ENCODE measurements at regions of chr10 and their contacts with region 1.

Region 1: GRCh38 chr10:4849555-4850242 is 23.7 kb downstream of the AKR1E2 start:
- DNase-seq: peak; percentile 92

Region 2: DNA sequence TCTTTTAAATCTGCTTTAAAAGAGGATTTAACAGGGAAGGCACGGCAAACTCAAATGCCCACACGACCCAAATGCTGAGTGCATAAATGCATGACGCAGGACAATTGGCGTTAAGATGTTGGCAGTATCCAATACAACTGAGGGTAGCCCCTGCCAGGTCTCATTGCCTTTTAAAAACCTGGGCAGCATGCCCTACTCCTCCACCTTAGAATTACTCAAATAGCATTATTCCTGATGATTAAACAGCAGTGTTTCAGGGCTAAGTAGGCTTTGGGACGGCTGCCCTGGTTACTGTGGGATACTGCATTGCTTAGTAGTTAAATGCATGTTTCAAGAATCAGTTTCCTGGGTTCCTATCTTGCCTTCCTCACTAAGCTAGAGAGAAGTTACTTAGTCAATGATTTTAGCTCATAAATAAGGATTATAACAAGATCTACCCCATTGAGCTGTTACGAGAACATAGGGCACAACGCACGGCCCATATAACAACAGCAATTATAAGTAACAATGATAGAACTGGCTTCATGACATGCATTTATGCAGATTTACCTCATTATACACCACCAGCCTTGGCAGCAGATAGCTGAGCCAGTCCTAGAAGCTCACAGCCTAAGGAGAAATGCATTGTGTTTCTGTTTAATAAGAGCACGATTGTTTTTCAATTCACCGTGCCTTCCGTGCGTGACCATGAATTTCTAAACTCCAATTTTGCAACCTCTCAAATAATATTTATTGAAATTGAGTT is 547.0 kb after region 1 on chr10:
- in situ Hi-C with region 1: loop called (anchors 25 kb)
- DNase-seq: no peak

Region 3: DNA sequence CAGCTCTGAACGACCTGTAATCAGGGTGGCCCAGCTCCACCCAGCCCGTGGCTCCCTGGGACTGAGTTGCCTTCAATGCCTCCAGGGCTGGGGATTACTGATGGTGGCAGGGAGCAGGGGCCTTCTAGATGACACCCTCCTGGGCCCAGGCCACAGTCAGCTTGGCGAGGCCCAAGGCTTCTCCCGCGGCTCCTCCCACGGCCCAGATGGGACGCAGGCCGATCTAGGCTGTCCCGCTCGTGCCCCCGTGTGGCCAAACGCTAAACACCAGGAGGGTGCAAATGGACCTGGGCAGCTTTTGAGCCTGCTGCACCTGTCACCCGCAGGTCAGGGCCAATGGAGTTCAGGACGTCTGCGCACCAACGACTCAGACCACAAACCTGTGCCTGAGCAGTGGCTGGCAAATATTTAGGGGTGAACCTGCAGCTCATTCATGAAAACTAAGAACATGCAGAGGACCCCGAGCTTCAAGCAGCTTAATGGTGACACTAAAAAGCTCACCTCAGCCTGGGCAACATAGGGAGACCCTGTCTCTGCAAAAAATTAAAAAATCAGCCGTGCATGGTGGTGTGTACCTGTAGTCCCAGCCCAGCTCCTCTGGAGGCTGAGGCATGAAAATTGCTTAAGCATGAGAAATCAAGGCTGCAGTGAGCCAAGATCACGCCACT is 773.5 kb after region 1 on chr10:
- in situ Hi-C with region 1: loop called (anchors 25 kb)
- DNase-seq: peak; percentile 78